Panc1 (cell line): ENCODE measurements at regions of chr1 and their contacts with region 1.

Region 1: DNA sequence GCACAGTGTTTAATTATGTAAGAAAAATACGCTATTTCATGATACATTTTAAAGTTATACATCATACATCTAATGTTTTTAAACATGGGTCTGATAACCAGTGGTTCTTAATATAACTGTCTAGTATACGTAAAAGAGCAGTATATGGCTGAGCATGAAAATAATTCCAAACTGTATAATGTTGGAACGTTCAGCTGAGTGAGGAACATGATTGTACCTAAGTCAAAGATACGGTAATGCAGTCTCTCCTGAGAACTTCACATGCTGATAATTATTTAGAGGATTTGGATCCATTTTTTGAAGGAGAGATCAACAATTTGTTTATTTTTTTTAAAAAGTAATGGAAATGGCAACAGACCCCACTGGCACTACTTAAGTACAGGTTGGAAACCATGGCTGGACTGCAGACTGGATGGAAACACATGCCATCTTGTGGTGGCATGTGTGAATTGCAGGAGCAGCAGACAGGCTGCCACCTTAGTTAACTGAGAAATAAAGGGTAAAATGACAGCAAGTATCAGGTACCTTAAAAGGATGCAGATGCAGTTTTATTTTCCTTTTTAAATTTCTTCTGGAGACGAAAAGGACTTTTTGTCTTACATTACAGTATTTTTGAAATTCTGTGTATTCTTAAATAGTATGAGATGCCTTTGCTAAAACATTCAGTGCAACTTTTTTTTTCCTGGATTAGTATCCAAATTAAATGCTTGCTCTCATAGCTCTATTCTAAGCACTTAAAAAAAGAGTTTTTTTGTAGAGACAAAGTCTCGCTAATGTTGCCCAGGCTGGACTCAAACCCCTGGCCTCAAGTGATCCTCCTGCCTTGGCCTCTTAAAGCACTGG is 73.8 kb downstream of the MTR start:
- DNase-seq: peak; percentile 64
- ATAC-seq: peak; percentile 96
- H3K4me3 ChIP-seq: no peak overlapping the region
- H3K27ac ChIP-seq: no peak overlapping the region
- H3K4me1 ChIP-seq: no peaks in the 10 kb centered on the region
- H3K27me3 ChIP-seq: no peaks in the 10 kb centered on the region
- CTCF ChIP-seq: peak; percentile 95

Region 2: GRCh38 chr1:236753516-236753915 is 115.3 kb before region 1 on chr1:
- CTCF ChIA-PET with region 1: no interaction called
- POLR2A ChIA-PET with region 1: no interaction called
- in situ Hi-C with region 1: no loop called
- intact Hi-C with region 1: loop called (anchors 2 kb)
- DNase-seq: no peak
- ATAC-seq: peak; percentile 96
- H3K4me3 ChIP-seq: no peak overlapping the region
- H3K27ac ChIP-seq: no peak overlapping the region
- H3K4me1 ChIP-seq: no peaks in the 10 kb centered on the region
- H3K27me3 ChIP-seq: no peaks in the 10 kb centered on the region
- CTCF ChIP-seq: peak; percentile 72